Activated naive CD4-positive, alpha-beta T cell treated with anti-CD3 and anti-CD28 coated beads for 36 hours (primary cell): ENCODE measurements at regions of chr11 and their contacts with region 1.

Region 1: DNA sequence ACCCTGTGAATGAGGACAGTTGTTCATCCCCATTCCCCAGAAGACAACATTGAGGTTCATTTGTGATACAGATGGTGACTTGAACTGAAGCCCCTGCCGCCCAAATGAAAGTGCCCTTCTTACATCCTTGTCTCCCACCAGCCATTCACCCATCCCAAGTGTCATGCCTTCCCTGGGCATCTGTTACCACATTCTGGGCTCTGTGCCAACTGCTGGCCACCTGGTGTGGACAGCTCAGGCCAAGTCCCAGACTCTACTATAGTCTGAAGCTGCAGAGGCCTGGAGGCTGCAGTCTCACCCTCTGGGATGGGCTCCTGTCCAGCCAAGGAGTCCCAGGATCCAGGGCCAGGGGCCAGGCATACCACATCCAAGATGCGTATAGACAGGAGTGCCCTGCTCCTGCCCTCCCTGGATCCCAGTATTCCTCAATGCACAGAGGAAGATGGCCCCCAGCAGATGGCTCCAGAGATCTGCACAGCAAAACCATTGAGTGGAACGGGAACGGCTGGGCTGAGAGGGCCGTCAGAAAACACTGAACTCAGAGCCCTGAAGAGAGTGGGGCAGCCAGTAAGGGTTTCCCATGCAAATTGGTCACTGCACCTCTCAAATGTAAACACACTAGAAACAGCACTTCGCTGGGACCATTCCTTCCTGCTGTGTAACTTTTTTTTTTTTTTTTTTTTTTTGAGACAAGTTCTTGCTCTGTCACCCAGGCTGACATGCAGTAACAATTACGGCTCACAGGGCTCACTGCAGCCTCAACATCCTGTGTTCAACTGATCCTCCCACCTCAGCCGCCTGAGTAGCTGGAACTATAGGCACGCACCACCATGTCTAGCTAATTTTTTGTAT is 22.8 kb downstream of the ARRB1 start:
- DNase-seq: peak; percentile 85
- H3K4me3 Mint-ChIP-seq: peak overlapping the region; percentile 25
- H3K27ac Mint-ChIP-seq: peak overlapping the region; percentile 74
- H3K4me1 Mint-ChIP-seq: peaks cover 78% of the 10 kb centered on the region
- H3K27me3 Mint-ChIP-seq: no peaks in the 10 kb centered on the region

Region 2: GRCh38 chr11:75280227-75280701 is 48.4 kb before region 1 on chr11:
- CTCF ChIA-PET with region 1: interaction called, 16 read pairs
- intact Hi-C with region 1: loop called (anchors 1 kb)
- DNase-seq: peak; percentile 86
- H3K4me3 Mint-ChIP-seq: no peak overlapping the region
- H3K27ac Mint-ChIP-seq: peak overlapping the region; percentile 73
- H3K4me1 Mint-ChIP-seq: peaks cover 38% of the 10 kb centered on the region
- H3K27me3 Mint-ChIP-seq: no peaks in the 10 kb centered on the region

Region 3: DNA sequence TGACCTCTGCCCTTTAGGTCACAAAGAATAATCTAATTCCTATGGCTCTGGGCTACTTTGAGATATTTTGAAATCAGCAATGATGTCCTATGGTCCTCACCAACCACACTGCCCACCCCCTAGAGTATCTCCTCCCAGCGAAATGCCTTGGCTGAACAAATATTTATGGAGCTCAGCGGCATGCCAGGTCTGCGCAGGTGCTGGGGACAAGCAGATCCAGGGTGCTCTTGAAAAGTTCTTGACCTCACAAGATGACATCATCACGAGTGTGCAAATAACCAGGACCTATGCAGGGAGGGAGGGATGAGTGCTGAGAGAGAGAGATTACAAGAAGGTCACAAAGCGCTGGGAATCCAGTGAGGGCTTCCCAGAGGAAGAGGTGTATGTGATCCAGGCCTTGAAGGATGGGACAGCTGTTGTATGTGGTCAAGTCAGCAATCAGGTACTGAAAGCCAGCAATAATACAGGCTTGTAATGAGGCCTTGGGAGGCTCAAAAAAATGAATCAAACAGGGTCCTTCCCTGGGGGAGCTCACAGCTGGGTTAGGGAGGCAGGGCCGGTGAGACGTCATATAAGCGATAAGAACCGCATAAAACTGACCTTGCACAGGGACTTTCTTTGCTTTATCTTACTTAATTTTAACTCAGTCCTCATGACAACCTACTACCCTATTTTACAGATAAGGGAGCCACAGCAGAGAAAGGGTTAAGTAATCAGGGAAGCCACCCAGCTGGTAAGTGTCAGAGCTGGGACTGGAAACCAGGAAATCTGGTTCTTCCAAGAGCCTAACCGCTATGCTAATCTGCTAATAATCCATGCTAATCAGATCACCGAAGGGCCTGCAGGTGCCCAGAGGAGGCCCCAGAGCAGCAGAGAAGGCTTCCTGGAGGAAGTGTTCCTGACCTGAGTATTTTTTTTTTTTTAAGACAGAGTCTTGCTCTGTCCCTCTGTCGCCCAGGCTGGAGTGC is 14.5 kb after region 1 on chr11:
- CTCF ChIA-PET with region 1: interaction called, 21 read pairs
- intact Hi-C with region 1: loop called (anchors 1 kb)
- DNase-seq: no peak
- H3K4me3 Mint-ChIP-seq: no peak overlapping the region
- H3K27ac Mint-ChIP-seq: peak overlapping the region; percentile 46
- H3K4me1 Mint-ChIP-seq: peaks cover 96% of the 10 kb centered on the region
- H3K27me3 Mint-ChIP-seq: no peaks in the 10 kb centered on the region

Region 4: DNA sequence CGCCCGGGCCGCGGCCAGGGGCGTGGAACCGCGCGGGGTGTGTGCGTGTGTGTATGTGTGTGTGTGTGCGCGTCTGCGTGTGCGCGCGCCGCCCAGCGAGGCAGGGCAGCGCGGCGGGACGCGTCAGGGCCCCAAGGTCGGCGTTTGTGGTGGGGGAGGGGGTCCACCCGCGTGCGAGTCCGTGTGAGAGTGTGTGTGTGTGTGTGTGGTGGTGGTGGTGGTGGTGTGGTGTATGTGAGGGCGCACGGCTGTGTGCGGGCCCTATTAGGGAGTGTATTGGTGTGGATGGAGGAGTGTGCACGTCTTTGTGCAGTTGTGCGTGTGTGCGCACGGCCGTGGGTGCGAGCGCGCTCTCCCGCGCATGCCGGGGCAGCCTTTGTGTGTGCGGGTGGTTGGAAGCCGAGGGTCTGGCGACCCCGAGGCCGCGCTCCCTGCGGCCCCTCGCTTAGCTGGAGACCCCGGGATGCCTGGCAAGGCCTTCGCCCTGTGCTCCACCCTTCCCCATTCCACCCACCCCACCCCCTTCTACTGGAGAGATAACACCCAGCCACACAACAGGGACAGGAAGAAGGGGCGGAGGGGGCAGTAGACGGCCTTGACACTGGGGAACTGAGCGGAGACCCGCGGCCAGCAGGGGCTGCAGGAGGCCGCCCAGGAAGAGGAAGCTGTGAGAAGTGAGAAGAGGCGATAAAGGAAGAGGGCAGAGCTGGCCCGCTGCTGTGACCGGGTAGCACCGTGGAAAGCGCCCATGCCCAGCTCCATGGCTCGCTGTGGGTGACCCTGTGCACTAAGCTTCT is 23.3 kb after region 1 on chr11:
- CTCF ChIA-PET with region 1: interaction called, 5 read pairs
- intact Hi-C with region 1: loop called (anchors 1 kb)
- DNase-seq: peak; percentile 54
- H3K4me3 Mint-ChIP-seq: peak overlapping the region; percentile 84
- H3K27ac Mint-ChIP-seq: peak overlapping the region; percentile 75
- H3K4me1 Mint-ChIP-seq: peaks cover 55% of the 10 kb centered on the region
- H3K27me3 Mint-ChIP-seq: no peaks in the 10 kb centered on the region

Region 5: GRCh38 chr11:75532200-75533048 is 203.8 kb after region 1 on chr11:
- CTCF ChIA-PET with region 1: interaction called, 7 read pairs
- intact Hi-C with region 1: loop called (anchors 1 kb)
- DNase-seq: peak; percentile 91
- H3K4me3 Mint-ChIP-seq: no peak overlapping the region
- H3K27ac Mint-ChIP-seq: no peak overlapping the region
- H3K4me1 Mint-ChIP-seq: peaks cover 14% of the 10 kb centered on the region
- H3K27me3 Mint-ChIP-seq: no peaks in the 10 kb centered on the region